Activated CD4-positive, alpha-beta memory T cell treated with anti-CD3 and anti-CD28 coated beads for 36 hours (primary cell): ENCODE measurements at regions of chr3 and their contacts with region 1.

Region 1: DNA sequence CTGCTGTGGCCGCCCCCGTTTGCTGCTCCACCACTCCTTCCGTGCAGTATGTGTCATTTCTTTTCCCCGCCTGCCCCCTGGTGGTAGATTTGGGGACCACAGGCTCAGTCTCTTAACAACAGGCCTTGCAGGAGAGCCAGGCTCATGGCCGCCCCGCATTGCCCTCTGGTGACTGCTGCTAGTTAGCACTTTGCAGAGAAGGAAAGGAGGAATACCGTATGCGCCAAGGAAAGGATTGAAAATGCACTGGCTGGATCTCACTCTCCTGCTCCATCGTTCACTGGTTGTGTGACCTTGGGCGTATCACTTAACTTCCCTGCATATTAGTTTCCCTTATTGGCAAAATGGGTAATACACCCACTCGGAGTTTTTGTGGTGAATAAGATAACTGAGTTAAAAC is 39.3 kb upstream of the PXYLP1 start:
- DNase-seq: peak; percentile 98
- H3K4me3 Mint-ChIP-seq: no peak overlapping the region
- H3K27ac Mint-ChIP-seq: no peak overlapping the region
- H3K4me1 Mint-ChIP-seq: peaks cover 13% of the 10 kb centered on the region
- H3K27me3 Mint-ChIP-seq: peaks cover 7% of the 10 kb centered on the region

Region 2: DNA sequence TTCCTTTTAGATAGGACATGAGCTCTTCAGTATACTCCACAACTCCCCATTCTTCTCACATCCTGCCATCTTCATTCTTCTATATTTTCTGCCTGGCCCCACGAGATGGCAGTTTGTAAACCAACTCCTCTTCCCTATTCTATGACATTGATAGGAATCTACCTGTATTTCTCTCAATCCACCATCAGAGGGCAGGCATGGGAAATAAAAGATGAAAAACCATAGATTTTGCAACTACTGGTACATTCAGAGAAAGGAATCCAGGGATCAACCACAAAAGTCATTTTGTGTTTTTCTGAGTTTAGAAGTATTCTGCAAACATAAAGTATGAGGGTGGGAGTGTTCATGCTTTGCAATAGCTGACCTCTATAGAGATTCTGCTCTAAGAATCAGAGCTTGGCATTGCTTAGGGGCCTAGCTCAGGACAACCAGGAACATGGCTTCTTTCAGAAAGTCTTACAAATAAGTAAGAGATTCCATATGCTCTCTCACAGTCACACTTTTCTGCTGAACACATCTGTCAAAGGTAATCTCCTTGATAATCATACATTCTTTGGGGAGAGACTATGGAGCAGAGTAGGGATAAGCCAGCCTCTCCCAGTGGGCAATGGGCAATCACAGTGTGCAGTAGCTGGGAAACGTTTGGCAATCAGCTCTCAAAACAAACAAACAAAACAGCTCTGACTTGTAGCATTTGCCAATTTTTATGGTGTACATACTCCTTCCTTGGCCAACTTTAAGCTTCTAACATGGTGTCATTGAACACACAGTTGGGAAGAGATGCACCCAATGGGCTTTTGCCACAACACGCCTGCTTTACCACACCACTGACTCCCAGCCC is 293.8 kb before region 1 on chr3:
- CTCF ChIA-PET with region 1: interaction called, 14 read pairs
- POLR2A ChIA-PET with region 1: no interaction called
- intact Hi-C with region 1: loop called (anchors 1 kb)
- DNase-seq: no peak
- H3K4me3 Mint-ChIP-seq: no peak overlapping the region
- H3K27ac Mint-ChIP-seq: no peak overlapping the region
- H3K4me1 Mint-ChIP-seq: no peaks in the 10 kb centered on the region
- H3K27me3 Mint-ChIP-seq: peaks cover 10% of the 10 kb centered on the region

Region 3: GRCh38 chr3:141000027-141000663 is 192.2 kb before region 1 on chr3:
- CTCF ChIA-PET with region 1: interaction called, 33 read pairs
- POLR2A ChIA-PET with region 1: no interaction called
- intact Hi-C with region 1: loop called (anchors 1 kb)
- DNase-seq: peak; percentile 66
- H3K4me3 Mint-ChIP-seq: no peak overlapping the region
- H3K27ac Mint-ChIP-seq: no peak overlapping the region
- H3K4me1 Mint-ChIP-seq: peaks cover 4% of the 10 kb centered on the region
- H3K27me3 Mint-ChIP-seq: no peaks in the 10 kb centered on the region

Region 4: GRCh38 chr3:141011232-141011996 is 180.9 kb before region 1 on chr3:
- CTCF ChIA-PET with region 1: interaction called, 12 read pairs
- POLR2A ChIA-PET with region 1: no interaction called
- intact Hi-C with region 1: loop called (anchors 1 kb)
- DNase-seq: peak; percentile 87
- H3K4me3 Mint-ChIP-seq: no peak overlapping the region
- H3K27ac Mint-ChIP-seq: no peak overlapping the region
- H3K4me1 Mint-ChIP-seq: peaks cover 3% of the 10 kb centered on the region
- H3K27me3 Mint-ChIP-seq: peaks cover 17% of the 10 kb centered on the region

Region 5: DNA sequence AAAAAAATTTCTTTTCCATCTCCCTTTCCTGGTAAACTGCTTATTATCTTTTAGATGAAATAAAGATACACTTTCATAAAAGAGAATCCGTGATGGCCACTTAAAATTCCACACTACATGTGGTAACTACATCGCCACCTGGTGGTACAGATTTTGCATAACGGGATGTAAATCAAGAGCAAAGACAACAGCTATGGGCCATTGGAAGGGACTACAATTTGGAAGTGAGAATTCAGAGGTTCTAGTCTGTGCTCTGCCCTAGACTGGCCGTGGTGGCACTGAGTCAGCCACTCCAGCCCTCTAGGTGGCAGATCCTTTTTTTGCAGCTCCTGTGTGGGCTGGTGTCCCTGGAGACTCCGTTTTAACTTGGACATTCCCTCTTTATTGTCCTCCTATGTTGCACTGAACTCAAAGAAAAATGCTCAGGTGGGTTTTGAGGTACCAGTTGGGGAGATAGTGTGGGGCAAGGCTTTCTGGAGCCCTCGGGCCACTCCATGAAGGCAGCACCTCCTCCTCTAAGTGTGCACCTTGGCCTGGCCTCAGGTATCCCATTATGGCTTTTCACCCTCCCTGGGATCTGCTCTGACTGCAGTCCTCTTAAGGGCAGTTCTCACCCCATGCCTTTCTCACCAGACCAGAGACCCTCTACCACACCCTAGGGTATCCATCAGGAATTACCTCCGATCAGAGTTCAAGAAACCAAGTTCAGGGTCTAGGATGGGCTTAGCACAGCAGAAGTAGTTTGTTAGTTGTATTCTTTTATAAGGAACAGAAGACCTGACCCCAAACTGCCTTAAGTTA is 86.3 kb before region 1 on chr3:
- CTCF ChIA-PET with region 1: interaction called, 5 read pairs
- POLR2A ChIA-PET with region 1: no interaction called
- intact Hi-C with region 1: loop called (anchors 5 kb)
- DNase-seq: peak; percentile 59
- H3K4me3 Mint-ChIP-seq: no peak overlapping the region
- H3K27ac Mint-ChIP-seq: no peak overlapping the region
- H3K4me1 Mint-ChIP-seq: no peaks in the 10 kb centered on the region
- H3K27me3 Mint-ChIP-seq: peaks cover 2% of the 10 kb centered on the region

Region 6: GRCh38 chr3:141271279-141272030 is 79.1 kb after region 1 on chr3:
- CTCF ChIA-PET with region 1: no interaction called
- POLR2A ChIA-PET with region 1: no interaction called
- intact Hi-C with region 1: no loop called
- DNase-seq: no peak
- H3K4me3 Mint-ChIP-seq: no peak overlapping the region
- H3K27ac Mint-ChIP-seq: no peak overlapping the region
- H3K4me1 Mint-ChIP-seq: peaks cover 43% of the 10 kb centered on the region
- H3K27me3 Mint-ChIP-seq: no peaks in the 10 kb centered on the region